IMR-90 (cell line): ENCODE measurements at regions of chr9 and their contacts with region 1.

Region 1: GRCh38 chr9:4519604-4520003 is 29.3 kb downstream of the SLC1A1 start:
- DNase-seq: no peak
- ATAC-seq: no peak
- H3K4me3 ChIP-seq: no peak overlapping the region
- H3K27ac ChIP-seq: no peak overlapping the region
- H3K4me1 ChIP-seq: no peaks in the 10 kb centered on the region
- H3K27me3 ChIP-seq: no peaks in the 10 kb centered on the region; the same call in 1 of the 2 replicates
- CTCF ChIP-seq: no peak
- POLR2A ChIP-seq: no peak
- RAD21 ChIP-seq: no peak

Region 2: DNA sequence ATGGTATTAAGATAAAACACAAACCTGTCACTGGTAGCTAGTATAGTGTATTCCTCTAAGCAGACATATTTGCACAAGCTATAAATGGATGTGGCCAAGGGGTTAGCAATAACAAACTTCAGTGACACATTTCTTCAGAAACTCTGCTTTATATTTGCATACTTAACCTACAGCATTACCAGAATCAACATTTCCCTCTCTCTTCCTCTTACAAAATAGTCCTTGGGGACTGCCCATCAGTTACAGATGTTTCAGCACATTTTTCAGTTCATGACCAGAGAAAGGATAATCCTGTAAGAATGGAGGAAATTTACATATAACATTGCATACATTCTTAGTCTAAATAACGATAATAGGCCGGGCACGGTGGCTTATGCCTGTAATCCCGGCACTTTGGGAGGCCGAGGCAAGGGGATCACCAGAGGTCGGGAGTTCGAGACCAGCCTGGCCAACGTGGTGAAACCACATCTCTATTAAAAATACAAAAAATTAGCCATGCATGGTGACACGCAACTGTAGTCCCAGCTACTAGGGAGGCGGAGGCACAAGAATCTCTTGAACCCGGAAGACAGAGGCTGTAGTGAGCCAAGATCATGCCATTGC is 54.6 kb before region 1 on chr9:
- CTCF ChIA-PET with region 1: no interaction called
- POLR2A ChIA-PET with region 1: no interaction called
- dilution Hi-C with region 1: no loop called
- in situ Hi-C with region 1: loop called (anchors 10 kb)
- intact Hi-C with region 1: no loop called
- DNase-seq: no peak
- ATAC-seq: no peak
- H3K4me3 ChIP-seq: no peak overlapping the region
- H3K27ac ChIP-seq: no peak overlapping the region
- H3K4me1 ChIP-seq: no peaks in the 10 kb centered on the region
- H3K27me3 ChIP-seq: peaks cover 2% of the 10 kb centered on the region; the same call in 1 of the 2 replicates
- CTCF ChIP-seq: no peak
- POLR2A ChIP-seq: no peak
- RAD21 ChIP-seq: no peak